GM18951 (cell line): ENCODE measurements at regions of chr5 and their contacts with region 1.

Region 1: GRCh38 chr5:157253547-157253946 is 12.4 kb upstream of the CYFIP2 start:
- POLR2A ChIP-seq: no peak

Region 2: DNA sequence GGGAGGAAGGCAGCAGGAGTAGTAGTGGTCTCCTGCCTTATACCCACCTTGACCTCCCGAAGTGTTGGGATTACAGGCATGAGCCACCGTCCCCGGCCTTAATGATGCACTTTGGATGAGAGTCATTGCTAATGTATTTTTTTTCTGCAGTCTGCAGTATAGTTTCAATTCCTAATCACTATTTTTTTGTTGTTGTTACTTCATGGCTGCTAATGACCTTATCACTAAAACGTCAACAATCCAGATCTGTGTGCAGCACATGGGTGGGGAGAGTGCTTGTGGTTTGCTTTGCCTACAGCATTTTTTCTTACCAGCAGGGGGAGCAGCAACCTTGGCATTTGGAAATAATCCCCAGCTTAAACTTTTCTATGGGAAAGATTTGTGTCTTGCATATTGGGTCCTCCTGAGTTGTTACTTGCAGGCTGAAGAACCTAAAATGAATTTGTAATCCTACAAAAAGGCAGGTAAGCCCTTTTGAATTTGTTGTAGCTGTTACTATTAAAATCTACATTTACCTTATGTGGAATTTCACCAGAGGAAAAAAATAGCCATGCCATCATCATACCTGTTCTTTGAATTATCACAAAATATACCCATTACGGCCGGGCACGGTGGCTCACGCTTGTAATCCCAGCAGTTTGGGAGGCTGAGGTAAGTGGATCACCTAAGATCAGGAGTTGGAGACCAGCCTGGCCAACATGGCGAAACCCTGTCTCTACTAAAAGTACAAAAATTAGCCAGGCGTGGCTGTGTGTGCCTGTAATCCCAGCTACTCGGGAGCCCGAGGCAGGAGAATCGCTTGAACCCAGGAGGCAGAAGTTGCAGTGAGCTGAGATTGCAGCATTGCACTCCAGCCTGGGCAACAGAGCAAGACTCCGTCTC is 104.6 kb before region 1 on chr5:
- in situ Hi-C with region 1: loop called (anchors 5 kb)
- POLR2A ChIP-seq: no peak